Right lobe of liver (tissue), 6 donors: ENCODE measurements at regions of chr6 and their contacts with region 1.

Region 1: GRCh38 chr6:43506667-43507471 is 3.3 kb downstream of the LRRC73 start:
- DNase-seq: peak; percentile 64 to 81 (median 79)
- ATAC-seq: peak; percentile 70 to 77 (median 73)
- H3K4me3 ChIP-seq: no peak overlapping the region
- H3K27ac ChIP-seq: no peak overlapping the region
- H3K4me1 ChIP-seq: peaks cover 0 to 14% (median 2%) of the 10 kb centered on the region in 4 donors
- H3K27me3 ChIP-seq: no peaks in the 10 kb centered on the region
- CTCF ChIP-seq: peak; percentile 88 to 98 (median 96)
- POLR2A ChIP-seq: no peak

Region 2: DNA sequence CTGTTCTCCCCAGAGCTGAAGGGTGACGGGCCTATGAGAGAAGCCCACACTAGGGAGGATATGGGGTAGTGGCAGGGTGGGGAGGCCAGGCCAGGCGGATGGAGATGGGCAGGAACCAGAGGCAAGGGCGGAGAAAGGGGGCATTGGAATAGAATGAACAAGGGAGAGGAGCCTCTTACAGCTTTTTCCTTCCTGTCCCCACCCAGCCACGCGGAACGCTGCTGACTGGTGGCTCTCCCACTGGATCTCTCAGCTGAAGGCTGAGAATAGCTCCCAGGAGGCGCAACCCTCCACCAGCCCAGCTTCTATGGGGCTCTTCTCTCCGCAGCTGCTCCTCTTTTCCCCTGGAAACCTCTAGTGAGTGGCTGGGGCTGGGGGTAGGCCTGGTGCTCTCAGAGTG is 62.3 kb before region 1 on chr6:
- intact Hi-C with region 1: no loop called
- DNase-seq: no peak
- ATAC-seq: no peak
- H3K4me3 ChIP-seq: no peak overlapping the region
- H3K27ac ChIP-seq: no peak overlapping the region
- H3K4me1 ChIP-seq: no peaks in the 10 kb centered on the region
- H3K27me3 ChIP-seq: no peaks in the 10 kb centered on the region
- CTCF ChIP-seq: no peak
- POLR2A ChIP-seq: no peak

Region 3: DNA sequence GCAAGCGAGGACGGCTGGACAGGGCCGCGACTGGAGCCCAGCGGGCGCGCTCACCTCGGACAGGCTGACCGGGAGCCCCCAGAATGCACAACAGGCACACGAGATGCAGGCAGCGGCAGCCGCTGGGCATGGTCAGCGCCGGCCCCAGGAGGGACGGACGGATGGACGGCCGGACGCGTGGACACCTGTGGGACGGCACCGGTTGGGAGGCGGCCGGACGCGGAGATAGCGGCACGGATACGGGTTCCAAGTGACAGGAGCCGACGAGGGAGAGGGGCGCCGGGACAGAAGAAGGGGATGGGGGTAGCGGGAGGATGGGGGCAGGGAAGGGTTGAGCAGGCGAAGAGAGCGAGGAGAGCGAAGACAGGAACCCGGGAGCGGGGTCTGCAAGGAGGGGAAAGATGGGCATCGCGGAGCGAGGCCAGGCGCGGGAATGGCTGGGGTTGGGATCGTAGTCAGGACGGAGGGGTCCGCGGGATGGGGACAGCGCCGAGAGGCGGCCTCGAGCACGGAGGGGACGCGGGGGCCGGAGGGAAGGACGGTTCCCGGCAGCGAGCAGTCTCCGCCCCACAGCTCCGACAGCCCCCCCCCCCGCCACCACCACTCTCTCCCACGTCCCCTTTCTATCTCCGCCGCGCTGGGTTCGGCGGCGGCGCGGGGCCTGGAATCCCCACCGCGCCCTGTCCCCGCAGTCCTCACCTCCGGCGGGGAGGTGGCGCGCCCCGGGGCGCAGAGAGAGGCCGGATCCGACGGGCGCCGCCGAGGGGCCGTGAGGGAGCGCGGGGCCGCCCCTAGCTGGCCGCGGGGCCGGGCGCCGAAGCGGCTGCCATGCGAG is 52.0 kb before region 1 on chr6:
- intact Hi-C with region 1: loop called (anchors 5 kb)
- DNase-seq: peak; percentile 88 to 91 (median 89)
- ATAC-seq: peak; percentile 48 to 97 (median 78)
- H3K4me3 ChIP-seq: peak overlapping the region; percentile 33 to 44 (median 39)
- H3K27ac ChIP-seq: no peak overlapping the region
- H3K4me1 ChIP-seq: peaks cover 0 to 13% (median 0%) of the 10 kb centered on the region in 4 donors
- H3K27me3 ChIP-seq: peaks cover 0 to 4% of the 10 kb centered on the region in 2 donors
- CTCF ChIP-seq: no peak
- POLR2A ChIP-seq: no peak

Region 4: DNA sequence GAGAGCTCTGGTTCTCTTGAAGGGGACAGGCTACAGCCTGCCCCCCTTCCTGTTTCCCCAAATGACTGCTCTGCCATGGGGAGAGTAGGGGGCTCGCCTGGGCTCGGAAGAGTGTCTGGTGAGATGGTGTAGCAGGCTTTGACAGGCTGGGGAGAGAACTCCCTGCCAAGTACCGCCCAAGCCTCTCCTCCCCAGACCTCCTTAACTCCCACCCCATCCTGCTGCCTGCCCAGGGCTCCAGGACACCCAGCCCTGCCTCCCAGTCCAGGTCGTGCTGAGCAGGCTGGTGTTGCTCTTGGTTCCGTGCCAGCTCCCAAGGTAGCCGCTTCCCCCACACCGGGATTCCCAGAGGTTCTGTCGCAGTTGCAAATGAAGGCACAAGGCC is 273.0 kb after region 1 on chr6:
- intact Hi-C with region 1: no loop called
- DNase-seq: peak in 1 of 3 donors; percentile 61
- ATAC-seq: peak; percentile 9 to 29 (median 18)
- H3K4me3 ChIP-seq: no peak overlapping the region
- H3K27ac ChIP-seq: no peak overlapping the region
- H3K4me1 ChIP-seq: peaks cover 0 to 17% (median 1%) of the 10 kb centered on the region in 4 donors
- H3K27me3 ChIP-seq: no peaks in the 10 kb centered on the region
- CTCF ChIP-seq: no peak
- POLR2A ChIP-seq: no peak